Heart right ventricle (tissue), 16 donors: ENCODE measurements at regions of chr1 and their contacts with region 1.

Region 1: DNA sequence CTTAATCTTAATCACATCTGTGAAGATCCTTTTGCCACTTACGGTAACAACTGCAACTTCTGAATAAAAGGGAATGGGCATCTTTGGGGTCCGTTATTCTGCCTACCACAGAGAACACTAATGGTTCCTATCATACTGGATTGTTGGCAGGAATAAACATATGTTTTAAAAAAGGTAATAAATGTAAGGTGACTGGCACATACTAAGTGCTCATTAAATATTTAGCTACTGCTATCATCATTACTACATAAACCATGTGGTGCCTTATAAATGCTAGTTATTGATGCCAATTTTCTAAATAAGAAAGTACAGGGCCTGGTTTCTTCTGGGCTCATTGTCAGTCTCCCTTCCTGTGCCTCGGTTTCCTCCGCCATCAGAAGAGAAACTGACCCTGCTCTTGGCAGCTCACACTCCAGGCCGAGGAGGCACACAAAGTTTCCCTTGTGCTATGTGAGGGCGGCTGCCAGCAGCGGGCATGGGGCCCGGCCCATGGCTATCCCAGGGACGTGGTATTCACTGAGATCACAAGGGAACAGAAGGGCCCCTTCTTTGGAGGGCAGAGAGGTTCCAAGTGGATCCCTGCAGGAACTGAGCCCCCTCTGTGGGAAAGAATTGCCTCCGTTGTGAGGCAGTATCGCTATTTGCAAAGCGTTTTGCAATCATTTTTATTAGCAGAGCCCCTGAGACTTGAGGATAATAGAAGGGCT is 26.2 kb downstream of the NAV1 start:
- DNase-seq: peak in 1 of 2 donors; percentile 36
- ATAC-seq: peak in 3 of 8 donors; percentile 13 to 66 (median 26)
- H3K4me3 ChIP-seq: no peak overlapping the region
- H3K27ac ChIP-seq: peak overlapping the region in 6 of 10 donors; percentile 38 to 67 (median 49)
- H3K4me1 ChIP-seq: peaks cover 13 to 100% (median 75%) of the 10 kb centered on the region in 9 donors
- H3K27me3 ChIP-seq: no peaks in the 10 kb centered on the region
- CTCF ChIP-seq: no peak

Region 2: DNA sequence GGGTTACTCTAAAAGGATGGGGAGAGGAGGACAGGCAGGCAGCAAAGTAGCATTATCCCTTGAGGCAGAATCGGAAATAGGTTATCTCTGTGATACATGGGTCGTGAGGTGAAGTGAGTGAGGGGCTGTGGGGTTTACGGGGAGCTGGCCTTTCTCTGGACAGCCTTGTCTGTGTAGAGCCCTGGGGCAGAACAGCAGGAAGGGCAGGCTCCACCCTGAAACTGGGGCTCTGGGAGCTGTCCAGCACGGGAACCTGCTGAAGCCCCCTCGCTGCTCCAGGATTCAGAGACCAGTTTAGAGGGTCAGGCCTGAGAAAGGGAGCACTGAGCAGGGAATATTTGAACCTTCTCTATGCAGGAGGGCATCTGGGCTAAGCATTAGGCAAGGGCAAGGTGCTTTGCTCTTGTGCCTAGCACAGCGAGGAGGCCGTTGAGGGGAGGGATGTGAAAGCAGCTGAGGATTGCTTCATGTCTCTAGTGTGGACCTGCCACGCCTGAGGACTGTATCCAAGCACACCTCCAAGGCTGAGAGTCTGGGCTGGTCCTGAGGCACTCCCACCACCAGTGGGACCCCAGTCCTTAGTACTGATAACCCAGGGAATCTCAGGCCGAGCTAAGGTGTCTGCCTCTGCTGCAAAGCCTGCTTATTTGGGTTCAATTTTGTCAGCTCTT is 29.5 kb after region 1 on chr1:
- intact Hi-C with region 1: loop called in 1 of 10 experiments (anchors 2 kb)
- DNase-seq: no peak
- ATAC-seq: no peak
- H3K4me3 ChIP-seq: no peak overlapping the region
- H3K27ac ChIP-seq: no peak overlapping the region
- H3K4me1 ChIP-seq: peaks cover 14 to 57% (median 45%) of the 10 kb centered on the region in 9 donors
- H3K27me3 ChIP-seq: no peaks in the 10 kb centered on the region
- CTCF ChIP-seq: no peak

Region 3: DNA sequence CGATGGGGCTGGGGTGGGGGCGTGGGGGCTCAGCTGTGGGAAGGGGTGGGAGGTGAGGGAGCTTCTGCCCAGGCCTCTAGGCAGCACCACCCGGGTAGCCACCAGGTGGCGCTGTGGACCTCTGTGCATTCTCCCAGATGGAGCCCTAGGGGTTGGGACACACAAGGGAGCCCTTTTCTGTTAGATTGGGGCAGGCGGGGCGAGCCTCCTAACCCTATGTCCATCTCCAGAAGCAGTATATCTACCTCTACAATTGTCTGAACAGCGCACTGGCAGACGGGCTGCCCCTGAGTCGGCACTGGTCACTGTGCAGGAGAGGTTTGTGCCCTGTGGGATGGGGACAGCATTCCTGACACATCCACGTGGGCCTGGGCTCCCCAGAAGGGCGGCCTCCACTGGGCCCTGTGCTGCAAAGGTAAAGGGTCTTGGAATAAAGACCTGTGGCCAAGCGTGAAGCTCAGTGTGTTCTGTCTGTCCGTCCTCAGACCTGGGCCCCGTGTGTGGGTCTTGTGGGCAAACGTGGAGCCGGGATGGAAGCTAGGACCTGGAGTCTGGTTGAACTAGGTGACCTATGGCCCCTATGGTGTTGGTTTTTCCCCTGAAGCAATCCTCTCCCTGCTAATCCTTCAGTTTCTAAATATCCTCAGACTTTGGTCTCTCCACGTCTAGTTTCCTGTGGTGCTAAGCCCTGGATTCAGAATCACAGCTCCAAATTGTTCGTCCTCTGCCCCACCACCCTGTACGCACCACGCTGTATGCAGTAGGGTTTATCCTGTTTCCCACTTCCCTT is 624.0 kb after region 1 on chr1:
- intact Hi-C with region 1: no loop called
- DNase-seq: peak; percentile 62 to 82
- ATAC-seq: peak; percentile 60 to 81 (median 68)
- H3K4me3 ChIP-seq: no peak overlapping the region
- H3K27ac ChIP-seq: no peak overlapping the region
- H3K4me1 ChIP-seq: peaks cover 0 to 14% (median 6%) of the 10 kb centered on the region in 9 donors
- H3K27me3 ChIP-seq: peaks cover 0 to 32% (median 20%) of the 10 kb centered on the region in 7 donors
- CTCF ChIP-seq: peak; percentile 76 to 88 (median 86)